Sciatic nerve (tissue), 2 donors: ENCODE measurements at regions of chr16 and their contacts with region 1.

Region 1: GRCh38 chr16:71383054-71383773 is 24.7 kb downstream of the CALB2 start:
- DNase-seq: no peak
- ATAC-seq: no peak

Region 2: GRCh38 chr16:71214746-71215381 is 168.3 kb before region 1 on chr16:
- intact Hi-C with region 1: no loop called
- DNase-seq: no peak
- ATAC-seq: no peak

Region 3: GRCh38 chr16:71811261-71811803 is 428.1 kb after region 1 on chr16:
- intact Hi-C with region 1: loop called (anchors 5 kb)
- DNase-seq: no peak
- ATAC-seq: no peak